Caco-2 (cell line): ENCODE measurements at regions of chr7 and their contacts with region 1.

Region 1: GRCh38 chr7:150322833-150323681 is at the starts of genes ACTR3C and LRRC61:
- DNase-seq: peak; percentile 81 to 87
- H3K4me3 ChIP-seq: peak within 1 kb of the TSS; percentile 93
- H3K4me3 Mint-ChIP-seq: peak within 1 kb of the TSS; percentile 95
- H3K27ac Mint-ChIP-seq: peak within 1 kb of the TSS; percentile 92
- H3K4me1 ChIP-seq: peaks cover 27% of the 10 kb centered on the region
- H3K4me1 Mint-ChIP-seq: peaks cover 19% of the 10 kb centered on the region
- H3K27me3 ChIP-seq: no peaks in the 10 kb centered on the region
- H3K27me3 Mint-ChIP-seq: no peaks in the 10 kb centered on the region
- CTCF ChIP-seq: peak; percentile 35 to 57
- total RNA-seq, gene ACTR3C: 8.0 and 9.2 TPM in 2 replicates
- total RNA-seq, gene LRRC61: 32.4 and 35.8 TPM in 2 replicates

Region 2: DNA sequence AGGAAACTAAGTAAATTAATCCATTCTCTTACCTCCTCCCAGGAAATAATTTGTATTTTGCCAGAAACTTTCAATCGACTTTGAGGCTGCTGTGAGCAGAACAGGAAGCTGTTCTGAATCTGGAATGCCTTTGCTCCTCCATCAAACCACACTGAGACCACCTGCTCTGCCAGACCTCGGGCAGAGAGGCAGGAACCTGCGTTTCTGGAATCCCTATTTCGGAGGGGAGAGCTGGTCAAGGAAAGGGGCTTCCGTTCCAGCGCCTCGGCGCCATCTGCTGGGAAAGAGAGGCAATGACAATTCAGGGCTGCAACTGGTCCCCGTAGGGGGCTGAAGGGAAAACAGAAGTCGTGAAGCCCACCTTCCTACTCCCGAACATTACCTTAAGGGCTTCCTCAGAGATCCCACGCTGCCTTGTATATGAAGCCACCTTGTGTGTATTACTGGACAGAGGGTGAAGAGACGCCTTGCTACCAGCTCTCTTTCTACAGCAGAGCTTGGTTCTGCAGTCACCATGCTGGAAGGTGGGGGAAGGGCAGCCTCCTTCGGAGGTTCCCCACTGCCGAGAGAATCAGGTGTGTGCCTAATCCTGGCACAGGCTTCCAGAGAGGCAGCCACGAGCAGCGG is 580.9 kb before region 1 on chr7:
- CTCF ChIA-PET with region 1: no interaction called
- POLR2A ChIA-PET with region 1: no interaction called
- intact Hi-C with region 1: no loop called
- DNase-seq: peak; percentile 74 to 82
- H3K4me3 ChIP-seq: peak overlapping the region; percentile 24
- H3K4me3 Mint-ChIP-seq: peak overlapping the region; percentile 75
- H3K27ac Mint-ChIP-seq: peak overlapping the region; percentile 20
- H3K4me1 ChIP-seq: no peaks in the 10 kb centered on the region
- H3K4me1 Mint-ChIP-seq: peaks cover 6% of the 10 kb centered on the region
- H3K27me3 ChIP-seq: no peaks in the 10 kb centered on the region
- H3K27me3 Mint-ChIP-seq: no peaks in the 10 kb centered on the region
- CTCF ChIP-seq: peak; percentile 90 to 95

Region 3: DNA sequence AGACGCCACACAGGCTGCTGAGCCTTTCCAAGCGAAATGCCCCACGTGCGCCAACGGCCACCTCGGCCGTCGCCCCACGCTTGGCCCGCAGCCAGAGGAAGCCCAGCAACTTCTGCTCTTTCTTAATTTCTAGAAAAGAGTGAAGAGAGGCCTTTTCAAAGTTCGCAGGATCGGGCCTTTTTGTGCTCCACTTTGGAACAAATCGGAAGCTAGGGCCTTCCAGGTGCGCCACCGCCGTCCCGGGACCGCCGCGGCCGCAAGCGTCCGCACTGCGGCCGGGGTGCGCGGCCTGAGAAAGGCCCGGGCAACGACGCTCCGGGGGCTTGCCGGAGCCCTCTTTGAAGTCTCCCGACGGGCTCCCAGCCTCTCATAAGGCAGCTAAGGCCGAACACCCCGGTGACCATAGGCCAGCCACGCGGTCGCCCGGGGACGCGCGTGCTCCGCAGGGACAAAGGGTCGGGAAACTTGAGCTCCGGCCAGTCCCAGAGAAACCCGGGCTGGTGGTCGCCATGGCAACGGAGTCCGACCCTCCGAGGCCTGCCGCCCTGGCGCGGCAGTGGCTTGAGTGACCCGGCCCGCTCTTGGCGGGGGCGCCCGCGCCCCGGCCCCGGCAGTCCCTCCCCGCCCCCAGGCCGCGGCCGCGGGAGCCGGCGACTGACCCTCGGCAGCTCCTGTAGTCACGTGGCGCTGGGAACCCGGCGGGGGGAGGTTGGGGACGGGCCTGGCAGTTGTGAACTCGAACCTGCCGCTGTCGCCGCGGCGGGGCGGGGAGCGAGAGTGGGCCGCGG is 45.2 kb after region 1 on chr7 and contains the start of gene REPIN1:
- CTCF ChIA-PET with region 1: no interaction called
- POLR2A ChIA-PET with region 1: interaction called, 5 read pairs
- intact Hi-C with region 1: loop called (anchors 1 kb)
- DNase-seq: peak; percentile 95 to 96
- H3K4me3 ChIP-seq: peak within 1 kb of the TSS; percentile 91
- H3K4me3 Mint-ChIP-seq: peak within 1 kb of the TSS; percentile 88
- H3K27ac Mint-ChIP-seq: peak within 1 kb of the TSS; percentile 99
- H3K4me1 ChIP-seq: peaks cover 17% of the 10 kb centered on the region
- H3K4me1 Mint-ChIP-seq: peaks cover under 1% of the 10 kb centered on the region
- H3K27me3 ChIP-seq: no peaks in the 10 kb centered on the region
- H3K27me3 Mint-ChIP-seq: no peaks in the 10 kb centered on the region
- CTCF ChIP-seq: no peak
- total RNA-seq, gene REPIN1: 141 and 148 TPM in 2 replicates

Region 4: GRCh38 chr7:150385302-150385723 is 62.3 kb after region 1 on chr7:
- CTCF ChIA-PET with region 1: no interaction called
- POLR2A ChIA-PET with region 1: no interaction called
- intact Hi-C with region 1: no loop called
- DNase-seq: no peak
- H3K4me3 ChIP-seq: no peak overlapping the region
- H3K4me3 Mint-ChIP-seq: no peak overlapping the region
- H3K27ac Mint-ChIP-seq: no peak overlapping the region
- H3K4me1 ChIP-seq: peaks cover 36% of the 10 kb centered on the region
- H3K4me1 Mint-ChIP-seq: peaks cover 18% of the 10 kb centered on the region
- H3K27me3 ChIP-seq: no peaks in the 10 kb centered on the region
- H3K27me3 Mint-ChIP-seq: no peaks in the 10 kb centered on the region
- CTCF ChIP-seq: no peak

Region 5: GRCh38 chr7:150567169-150567568 is 244.1 kb after region 1 on chr7 and contains the start of gene GIMAP4:
- CTCF ChIA-PET with region 1: no interaction called
- POLR2A ChIA-PET with region 1: no interaction called
- intact Hi-C with region 1: no loop called
- DNase-seq: no peak
- H3K4me3 ChIP-seq: no peak within 1 kb of the TSS
- H3K4me3 Mint-ChIP-seq: no peak within 1 kb of the TSS
- H3K27ac Mint-ChIP-seq: no peak within 1 kb of the TSS
- H3K4me1 ChIP-seq: no peaks in the 10 kb centered on the region
- H3K4me1 Mint-ChIP-seq: no peaks in the 10 kb centered on the region
- H3K27me3 ChIP-seq: no peaks in the 10 kb centered on the region; the same call in 1 of the 2 replicates
- H3K27me3 Mint-ChIP-seq: peaks cover 9% of the 10 kb centered on the region
- CTCF ChIP-seq: no peak
- total RNA-seq, gene GIMAP4: not detected in 2 replicates